Naive thymus-derived CD4-positive, alpha-beta T cell (primary cell): ENCODE measurements at regions of chr12 and their contacts with region 1.

Region 1: DNA sequence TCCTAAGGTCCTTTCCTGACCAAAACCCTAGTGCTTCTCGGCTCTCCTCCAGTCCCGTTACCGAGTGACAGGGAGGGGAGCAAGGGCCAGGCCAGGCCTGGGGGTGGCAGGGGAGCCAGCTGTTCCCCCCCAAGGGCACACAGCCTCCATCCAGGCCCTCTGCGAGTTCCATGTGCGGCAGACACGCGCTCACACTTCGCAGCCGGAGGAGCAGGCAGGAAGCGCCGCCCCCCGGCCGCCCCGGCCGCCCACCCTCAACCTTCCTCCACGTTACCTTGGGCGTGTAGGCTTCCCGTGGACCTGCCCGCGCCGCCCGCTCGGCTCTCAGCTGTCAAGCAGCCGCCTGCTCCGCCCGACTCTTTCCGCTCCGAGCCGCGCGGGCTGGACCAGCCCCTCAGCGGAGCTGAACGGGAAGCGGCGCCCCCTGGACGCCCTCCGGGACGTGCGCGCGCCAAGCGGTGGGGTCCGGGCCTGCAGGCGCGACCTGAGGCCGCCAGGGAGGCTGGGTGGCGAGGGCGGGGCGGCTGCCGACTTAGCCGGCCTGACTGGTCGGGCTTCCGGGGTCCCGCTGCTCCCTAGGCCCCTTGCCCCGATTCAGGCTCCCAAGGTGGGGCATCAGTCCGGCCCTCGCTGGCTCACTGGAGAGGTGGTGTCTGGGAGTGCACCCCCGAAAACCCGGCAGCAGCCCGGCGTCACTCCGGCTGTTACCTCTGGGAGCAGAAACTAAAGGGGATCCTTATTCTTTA is at the start of gene CRACR2A:
- DNase-seq: peak; percentile 75 to 85 (median 83)
- ATAC-seq: peak; percentile 90
- H3K4me3 ChIP-seq: peak within 1 kb of the TSS; percentile 77
- H3K4me3 Mint-ChIP-seq: peak within 1 kb of the TSS; percentile 89 to 100 (median 94)
- H3K27ac ChIP-seq: peak within 1 kb of the TSS; percentile 93
- H3K27ac Mint-ChIP-seq: peak within 1 kb of the TSS; percentile 93 to 100 (median 97)
- H3K4me1 ChIP-seq: peaks cover 25 to 34% of the 10 kb centered on the region in 2 donors
- H3K4me1 Mint-ChIP-seq: peaks cover 46 to 70% (median 58%) of the 10 kb centered on the region in 7 donors
- H3K27me3 ChIP-seq: no peaks in the 10 kb centered on the region
- H3K27me3 Mint-ChIP-seq: no peaks in the 10 kb centered on the region
- total RNA-seq, gene CRACR2A: 31.4 to 40.3 (median 39.4) TPM

Region 2: DNA sequence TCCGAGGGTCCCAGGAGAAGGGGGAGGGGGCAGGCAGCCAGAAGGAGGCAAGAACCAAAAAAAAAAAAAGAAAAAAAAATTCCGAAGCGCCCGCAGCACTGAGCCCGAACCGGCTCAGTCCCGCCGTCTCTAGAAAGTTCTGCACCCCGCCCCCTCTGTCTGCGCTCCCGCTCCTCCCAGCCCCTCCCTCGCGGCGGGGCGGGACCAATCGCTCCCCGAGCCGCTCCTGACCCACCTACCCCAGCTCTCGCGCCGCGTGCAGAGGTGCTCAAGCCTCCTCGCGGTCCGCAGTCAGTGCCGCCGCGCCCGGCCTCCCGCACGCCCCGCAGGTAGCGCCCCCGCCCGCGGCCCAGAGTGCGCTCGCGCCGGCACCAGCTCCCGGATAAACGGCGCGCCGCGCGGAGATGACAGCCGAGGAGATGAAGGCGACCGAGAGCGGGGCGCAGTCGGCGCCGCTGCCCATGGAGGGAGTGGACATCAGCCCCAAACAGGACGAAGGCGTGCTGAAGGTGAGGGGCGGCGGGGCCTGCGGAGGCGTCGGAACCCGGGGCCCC is 958.1 kb before region 1 on chr12 and contains the start of gene FKBP4:
- CTCF ChIA-PET with region 1: no interaction called
- POLR2A ChIA-PET with region 1: no interaction called
- intact Hi-C with region 1: loop called in 1 of 2 experiments (anchors 5 kb)
- DNase-seq: peak; percentile 77 to 92 (median 86)
- ATAC-seq: peak; percentile 95
- H3K4me3 ChIP-seq: peak within 1 kb of the TSS; percentile 95
- H3K4me3 Mint-ChIP-seq: peak within 1 kb of the TSS; percentile 88 to 97 (median 94)
- H3K27ac ChIP-seq: peak within 1 kb of the TSS; percentile 73
- H3K27ac Mint-ChIP-seq: peak within 1 kb of the TSS; percentile 48 to 93 (median 84)
- H3K4me1 ChIP-seq: peaks cover 8 to 11% of the 10 kb centered on the region in 2 donors
- H3K4me1 Mint-ChIP-seq: peaks cover 17 to 37% (median 31%) of the 10 kb centered on the region in 7 donors
- H3K27me3 ChIP-seq: no peaks in the 10 kb centered on the region
- H3K27me3 Mint-ChIP-seq: peaks cover 0 to 21% (median 0%) of the 10 kb centered on the region in 5 donors
- total RNA-seq, gene FKBP4: 47.4 to 95.4 (median 54.6) TPM

Region 3: DNA sequence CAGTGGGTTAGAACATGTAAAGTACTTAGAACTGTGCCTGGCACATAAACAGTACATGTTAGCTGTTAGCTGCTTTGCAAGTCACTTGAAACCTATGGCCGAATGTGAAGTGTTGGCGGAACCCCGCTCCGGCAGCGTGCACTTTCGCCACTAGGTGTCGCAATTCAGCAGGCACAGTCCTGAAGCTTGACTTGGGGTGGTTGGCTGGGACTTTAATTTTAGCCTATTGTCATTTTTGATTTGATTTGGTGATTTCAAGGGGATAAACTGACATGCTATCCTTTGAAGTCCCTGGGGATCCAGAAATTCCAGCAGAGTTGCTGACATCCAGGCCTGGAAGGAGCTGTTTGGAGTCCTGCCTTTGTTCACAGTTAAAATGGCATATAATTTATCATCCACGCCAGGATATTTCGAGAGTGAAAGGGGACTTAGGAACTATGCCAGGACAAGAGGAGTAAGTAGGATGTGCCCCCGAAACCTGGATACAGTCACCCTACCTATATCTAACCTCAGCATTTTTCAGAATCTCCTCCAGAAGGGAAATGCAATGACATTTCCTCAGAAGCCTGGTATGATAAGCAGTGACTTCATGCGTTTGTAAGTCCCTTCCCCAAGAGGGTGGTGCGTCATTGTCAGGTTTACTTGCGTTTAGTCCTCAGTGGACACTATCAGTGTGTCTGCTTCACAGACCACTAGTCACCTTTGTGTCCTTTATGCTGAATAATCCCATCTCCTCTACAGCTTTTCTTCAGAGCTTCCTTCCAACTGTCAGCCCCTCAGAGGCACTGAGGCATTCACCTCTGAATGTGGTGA is 679.3 kb before region 1 on chr12:
- CTCF ChIA-PET with region 1: no interaction called
- POLR2A ChIA-PET with region 1: no interaction called
- intact Hi-C with region 1: loop called in 1 of 2 experiments (anchors 2 kb)
- DNase-seq: peak; percentile 63 to 86 (median 76)
- ATAC-seq: peak; percentile 69
- H3K4me3 ChIP-seq: no peak overlapping the region
- H3K4me3 Mint-ChIP-seq: peak overlapping the region in 2 of 10 donors; percentile 27 to 51
- H3K27ac ChIP-seq: no peak overlapping the region
- H3K27ac Mint-ChIP-seq: peak overlapping the region in 1 of 9 donors; percentile 9
- H3K4me1 ChIP-seq: peaks cover 0 to 3% of the 10 kb centered on the region in 2 donors
- H3K4me1 Mint-ChIP-seq: peaks cover 0 to 21% (median 13%) of the 10 kb centered on the region in 7 donors
- H3K27me3 ChIP-seq: peaks cover 0 to 4% of the 10 kb centered on the region in 2 donors
- H3K27me3 Mint-ChIP-seq: peaks cover 0 to 32% (median 5%) of the 10 kb centered on the region in 5 donors

Region 4: DNA sequence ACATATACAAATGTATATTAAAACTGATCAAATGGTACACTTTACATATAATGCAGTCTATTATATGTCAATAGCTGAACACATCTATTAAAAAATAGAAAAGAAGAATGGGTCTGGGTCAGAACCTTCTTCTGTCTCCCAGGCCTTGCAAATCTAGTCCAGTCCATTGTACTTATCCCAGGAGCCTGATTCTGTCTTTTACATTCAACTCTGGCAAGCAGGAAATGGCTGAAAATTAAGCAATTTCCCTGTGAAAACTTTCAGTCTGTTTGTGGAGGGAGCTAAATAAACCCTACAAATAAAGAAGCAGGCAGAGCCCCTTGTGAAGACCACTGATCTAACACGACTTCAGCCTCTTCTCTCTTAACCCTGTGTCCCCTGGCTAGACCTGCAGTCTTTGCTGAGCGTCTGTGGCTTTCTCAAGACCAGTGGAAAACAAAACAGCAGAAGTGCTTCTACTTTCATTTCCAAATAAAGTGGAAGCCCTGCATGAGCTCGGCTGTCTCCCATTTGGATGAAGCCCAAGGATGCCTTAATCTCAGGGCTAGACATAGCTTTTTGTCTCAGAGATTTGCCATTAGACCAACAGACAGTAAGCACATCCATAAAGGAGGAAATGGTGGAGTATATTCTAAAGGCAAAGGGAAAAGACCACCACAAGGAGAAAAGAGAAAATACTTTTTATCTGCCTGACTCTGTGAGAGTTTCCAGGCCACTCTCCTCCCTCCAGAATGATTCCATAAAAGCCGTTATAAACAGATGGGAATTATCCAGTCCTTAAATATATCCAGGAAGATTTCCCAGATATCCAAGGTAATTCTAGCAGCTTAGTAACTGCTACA is 48.2 kb before region 1 on chr12:
- CTCF ChIA-PET with region 1: no interaction called
- POLR2A ChIA-PET with region 1: no interaction called
- intact Hi-C with region 1: loop called in 1 of 2 experiments (anchors 5 kb)
- DNase-seq: no peak
- ATAC-seq: no peak
- H3K4me3 ChIP-seq: no peak overlapping the region
- H3K4me3 Mint-ChIP-seq: peak overlapping the region in 1 of 10 donors; percentile 21
- H3K27ac ChIP-seq: no peak overlapping the region
- H3K27ac Mint-ChIP-seq: peak overlapping the region in 2 of 9 donors; percentile 17 to 26
- H3K4me1 ChIP-seq: no peaks in the 10 kb centered on the region
- H3K4me1 Mint-ChIP-seq: peaks cover 4 to 16% (median 9%) of the 10 kb centered on the region in 7 donors
- H3K27me3 ChIP-seq: no peaks in the 10 kb centered on the region
- H3K27me3 Mint-ChIP-seq: no peaks in the 10 kb centered on the region

Region 5: GRCh38 chr12:3735432-3735831 is 17.5 kb before region 1 on chr12:
- CTCF ChIA-PET with region 1: no interaction called
- POLR2A ChIA-PET with region 1: no interaction called
- intact Hi-C with region 1: no loop called
- DNase-seq: no peak
- ATAC-seq: no peak
- H3K4me3 ChIP-seq: no peak overlapping the region
- H3K4me3 Mint-ChIP-seq: no peak overlapping the region
- H3K27ac ChIP-seq: no peak overlapping the region
- H3K27ac Mint-ChIP-seq: no peak overlapping the region
- H3K4me1 ChIP-seq: no peaks in the 10 kb centered on the region
- H3K4me1 Mint-ChIP-seq: peaks cover 0 to 24% (median 7%) of the 10 kb centered on the region in 7 donors
- H3K27me3 ChIP-seq: no peaks in the 10 kb centered on the region
- H3K27me3 Mint-ChIP-seq: no peaks in the 10 kb centered on the region

Region 6: DNA sequence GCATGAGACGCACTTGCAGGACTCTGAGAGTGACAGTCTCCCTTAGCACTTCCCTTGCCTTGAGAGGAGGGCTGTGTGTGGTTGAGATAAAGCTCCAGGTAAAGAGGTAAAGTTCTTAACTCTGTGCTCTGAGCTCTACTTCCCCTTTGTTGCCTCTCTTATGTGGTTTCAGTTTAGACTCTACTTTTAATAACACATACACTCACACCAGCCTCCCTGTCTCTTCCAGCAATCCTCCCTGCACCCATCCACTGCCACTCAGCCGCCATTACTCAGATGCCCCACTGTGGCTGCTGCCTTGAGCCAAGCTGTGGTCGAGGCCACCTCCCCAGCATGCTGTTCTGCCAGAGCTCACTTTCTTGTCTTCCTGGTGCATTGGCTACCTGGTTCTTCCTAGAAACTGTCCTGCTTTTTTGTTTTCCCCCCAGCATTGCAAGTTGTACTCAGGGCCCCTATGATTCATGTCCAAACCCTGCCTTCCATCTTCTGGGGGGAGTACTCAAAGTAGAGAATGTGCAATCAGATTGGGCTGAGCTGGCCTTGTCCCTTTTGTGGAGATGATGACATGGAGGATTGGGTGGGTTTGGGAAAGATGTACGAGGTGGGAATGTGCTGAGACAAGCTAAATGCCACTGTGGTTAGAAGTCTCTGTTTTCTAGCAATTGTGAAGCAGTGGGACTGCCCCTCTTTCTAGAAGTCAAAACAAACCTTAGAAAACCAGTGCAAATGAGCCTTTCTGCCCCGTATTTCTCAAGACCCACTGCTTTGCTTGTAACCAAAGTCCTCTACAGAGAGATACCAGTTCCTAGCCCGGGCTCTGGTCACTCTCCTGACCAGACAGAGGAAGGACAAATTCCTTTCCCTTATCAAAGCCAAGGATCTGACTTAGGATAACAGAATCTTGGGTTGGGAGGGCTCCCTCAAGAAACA is 235.9 kb after region 1 on chr12:
- CTCF ChIA-PET with region 1: no interaction called
- POLR2A ChIA-PET with region 1: no interaction called
- intact Hi-C with region 1: loop called in 1 of 2 experiments (anchors 5 kb)
- DNase-seq: peak in 7 of 9 donors; percentile 33 to 71 (median 62)
- ATAC-seq: peak; percentile 87
- H3K4me3 ChIP-seq: peak overlapping the region; percentile 20
- H3K4me3 Mint-ChIP-seq: peak overlapping the region; percentile 62 to 75 (median 70)
- H3K27ac ChIP-seq: peak overlapping the region; percentile 61
- H3K27ac Mint-ChIP-seq: peak overlapping the region; percentile 81 to 95 (median 91)
- H3K4me1 ChIP-seq: peaks cover 9 to 21% of the 10 kb centered on the region in 2 donors
- H3K4me1 Mint-ChIP-seq: peaks cover 12 to 52% (median 37%) of the 10 kb centered on the region in 7 donors
- H3K27me3 ChIP-seq: no peaks in the 10 kb centered on the region
- H3K27me3 Mint-ChIP-seq: peaks cover 0 to 15% (median 0%) of the 10 kb centered on the region in 5 donors

Region 7: DNA sequence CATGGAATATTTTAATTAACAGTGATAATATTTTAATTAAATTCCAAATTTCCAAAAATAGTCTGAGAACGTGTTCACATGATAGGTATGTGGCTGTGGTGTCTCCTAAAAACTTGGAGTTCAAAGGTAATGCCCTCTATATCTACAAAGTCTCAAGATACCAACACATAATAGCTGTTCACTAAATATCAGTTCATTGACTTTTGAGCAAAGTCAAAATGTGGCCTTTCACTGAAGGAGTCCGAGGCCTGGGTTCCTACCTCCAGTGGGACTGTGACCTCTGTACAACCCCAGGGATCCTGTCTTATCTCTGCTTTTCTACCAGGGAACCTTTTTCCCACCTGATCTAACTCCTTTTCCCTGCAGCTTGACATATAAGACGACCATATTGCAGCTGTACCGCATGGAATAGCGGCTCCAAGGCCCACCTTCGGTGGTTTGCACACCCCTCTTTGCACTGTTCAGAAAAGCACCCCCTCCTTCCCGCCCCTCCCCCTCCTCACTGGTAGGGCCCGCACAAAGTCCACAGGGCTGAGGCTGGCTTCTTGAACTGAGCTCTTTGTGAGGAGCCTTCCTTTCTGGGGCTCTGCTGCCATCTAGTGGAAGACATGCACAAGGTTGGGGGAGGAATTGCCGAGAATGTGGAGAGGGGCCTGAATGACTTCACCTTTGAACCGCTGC is 523.8 kb after region 1 on chr12:
- CTCF ChIA-PET with region 1: no interaction called
- POLR2A ChIA-PET with region 1: interaction called, 4 read pairs
- intact Hi-C with region 1: loop called (anchors 2 to 5 kb)
- DNase-seq: peak; percentile 61 to 88 (median 87)
- ATAC-seq: peak; percentile 59
- H3K4me3 ChIP-seq: peak overlapping the region; percentile 85
- H3K4me3 Mint-ChIP-seq: peak overlapping the region; percentile 89 to 99 (median 95)
- H3K27ac ChIP-seq: peak overlapping the region; percentile 97
- H3K27ac Mint-ChIP-seq: peak overlapping the region; percentile 82 to 98 (median 96)
- H3K4me1 ChIP-seq: peaks cover 34 to 56% of the 10 kb centered on the region in 2 donors
- H3K4me1 Mint-ChIP-seq: peaks cover 41 to 66% (median 59%) of the 10 kb centered on the region in 7 donors
- H3K27me3 ChIP-seq: no peaks in the 10 kb centered on the region
- H3K27me3 Mint-ChIP-seq: peaks cover 0 to 2% (median 0%) of the 10 kb centered on the region in 5 donors

Region 8: GRCh38 chr12:4648501-4649357 is 895.8 kb after region 1 on chr12 and contains the starts of genes AKAP3 and NDUFA9:
- CTCF ChIA-PET with region 1: no interaction called
- POLR2A ChIA-PET with region 1: no interaction called
- intact Hi-C with region 1: loop called in 1 of 2 experiments (anchors 2 kb)
- DNase-seq: peak; percentile 53 to 87 (median 84)
- ATAC-seq: peak; percentile 97
- H3K4me3 ChIP-seq: peak within 1 kb of the TSS; percentile 92
- H3K4me3 Mint-ChIP-seq: peak within 1 kb of the TSS; percentile 88 to 99 (median 97)
- H3K27ac ChIP-seq: peak within 1 kb of the TSS; percentile 80
- H3K27ac Mint-ChIP-seq: peak within 1 kb of the TSS; percentile 90 to 99 (median 95)
- H3K4me1 ChIP-seq: peaks cover 14 to 15% of the 10 kb centered on the region in 2 donors
- H3K4me1 Mint-ChIP-seq: peaks cover 24 to 58% (median 46%) of the 10 kb centered on the region in 7 donors
- H3K27me3 ChIP-seq: no peaks in the 10 kb centered on the region
- H3K27me3 Mint-ChIP-seq: peaks cover 0 to 13% (median 0%) of the 10 kb centered on the region in 5 donors
- total RNA-seq, gene AKAP3: 1.2 to 6.9 (median 2.5) TPM
- total RNA-seq, gene NDUFA9: 55.5 to 103 (median 58.2) TPM